PC-3 (cell line): ENCODE measurements at regions of chr11 and their contacts with region 1.

Region 1: DNA sequence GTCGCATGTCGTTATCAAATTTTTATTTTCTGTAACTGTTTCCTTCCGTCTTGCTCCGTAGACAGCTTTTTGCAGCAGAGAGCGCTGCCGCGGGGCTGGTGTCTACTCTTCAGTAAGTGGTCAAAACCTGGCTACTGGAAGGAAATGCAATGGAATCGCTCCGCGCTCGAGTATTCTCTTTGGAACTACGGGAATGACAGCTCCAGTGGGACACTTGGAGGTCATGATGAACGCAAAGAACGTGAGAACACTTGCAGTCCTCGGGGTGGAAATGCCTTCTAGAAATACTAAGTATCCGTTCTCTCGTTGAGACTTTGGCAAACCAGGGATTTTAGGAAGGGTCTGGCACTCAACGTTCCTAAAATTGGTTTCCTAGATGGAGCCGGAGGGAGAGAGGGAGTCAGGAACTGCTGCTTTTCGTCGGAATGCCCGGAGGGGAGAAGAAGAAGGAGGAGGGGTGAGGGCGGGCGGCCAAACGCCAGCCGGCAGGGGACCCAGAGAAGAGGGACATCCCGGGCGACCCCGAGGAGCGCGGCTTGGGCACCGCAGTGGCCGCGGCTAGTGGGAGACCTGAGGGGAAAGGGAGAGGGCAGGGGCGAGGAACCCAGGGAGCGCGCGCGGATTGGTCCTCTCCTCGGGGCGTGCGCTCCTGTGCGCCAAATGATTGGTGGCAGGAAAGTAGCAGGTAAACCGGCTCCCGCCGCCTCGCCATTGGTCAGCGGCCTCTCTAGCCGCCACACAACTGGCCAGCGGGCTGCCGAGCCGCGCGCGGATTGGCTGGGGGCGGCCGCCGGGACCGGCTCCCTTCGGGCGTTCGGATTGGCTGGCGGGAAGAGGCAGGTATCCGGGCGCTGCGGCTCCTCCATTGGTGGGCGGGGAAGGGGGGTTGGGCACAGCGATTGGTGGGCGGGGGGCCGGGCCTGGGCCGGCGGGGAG is 490 bp upstream of the BMAL1 start:
- DNase-seq: peak; percentile 96
- ATAC-seq: peak; percentile 93
- H3K4me3 ChIP-seq: peak overlapping the region; percentile 94
- H3K27ac ChIP-seq: no peak overlapping the region
- H3K4me1 ChIP-seq: no peaks in the 10 kb centered on the region
- H3K27me3 ChIP-seq: peaks cover 22% of the 10 kb centered on the region; the same call in 1 of the 2 replicates
- CTCF ChIP-seq: no peak

Region 2: DNA sequence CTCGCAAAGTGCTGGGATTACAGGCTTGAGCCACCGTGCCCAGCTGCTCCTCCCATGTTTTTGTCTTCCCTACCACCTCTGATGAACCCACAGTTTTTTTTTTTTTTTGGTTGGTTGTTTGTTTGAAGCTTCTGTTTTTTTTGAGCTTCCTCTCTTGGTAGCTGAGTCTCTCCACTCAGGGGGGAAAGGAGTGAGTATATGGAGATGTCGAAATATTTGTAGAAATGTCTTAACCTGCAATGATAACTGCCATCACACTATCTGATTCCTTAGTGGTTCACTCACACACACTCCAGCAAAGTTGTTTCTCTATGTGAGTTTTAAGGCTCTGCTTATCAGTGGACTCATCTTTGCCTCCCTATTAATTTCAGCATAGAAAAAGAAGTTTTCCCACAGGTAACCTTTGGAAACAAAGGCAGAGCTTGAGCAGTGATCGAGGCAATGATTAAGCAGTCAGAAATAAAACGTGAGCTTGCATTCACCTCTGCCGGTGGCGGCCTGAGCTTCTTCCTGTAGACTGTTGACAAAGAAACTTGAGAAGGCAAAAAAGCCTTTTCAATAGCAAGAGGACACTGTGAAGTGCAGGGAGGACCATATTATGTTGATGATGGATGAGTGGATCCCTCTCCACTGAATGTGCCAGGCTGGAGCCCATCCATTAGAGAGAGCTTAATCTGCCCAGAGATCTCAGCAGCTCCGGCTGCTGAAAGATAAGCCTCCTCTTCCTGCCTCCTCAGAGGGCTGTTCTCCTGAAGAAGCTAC is 297.0 kb before region 1 on chr11:
- CTCF ChIA-PET with region 1: no interaction called
- POLR2A ChIA-PET with region 1: interaction called, 11 read pairs
- intact Hi-C with region 1: no loop called
- DNase-seq: peak; percentile 24
- ATAC-seq: peak; percentile 65
- H3K4me3 ChIP-seq: no peak overlapping the region
- H3K27ac ChIP-seq: no peak overlapping the region
- H3K4me1 ChIP-seq: peaks cover 5% of the 10 kb centered on the region; the same call in 1 of the 2 replicates
- H3K27me3 ChIP-seq: no peaks in the 10 kb centered on the region
- CTCF ChIP-seq: no peak

Region 3: GRCh38 chr11:13216019-13216710 is 60.9 kb before region 1 on chr11:
- CTCF ChIA-PET with region 1: no interaction called
- POLR2A ChIA-PET with region 1: no interaction called
- intact Hi-C with region 1: loop called (anchors 5 kb)
- DNase-seq: peak; percentile 94
- ATAC-seq: peak; percentile 94
- H3K4me3 ChIP-seq: peak overlapping the region; percentile 48
- H3K27ac ChIP-seq: peak overlapping the region; percentile 99
- H3K4me1 ChIP-seq: peaks cover 42% of the 10 kb centered on the region
- H3K27me3 ChIP-seq: no peaks in the 10 kb centered on the region
- CTCF ChIP-seq: no peak

Region 4: DNA sequence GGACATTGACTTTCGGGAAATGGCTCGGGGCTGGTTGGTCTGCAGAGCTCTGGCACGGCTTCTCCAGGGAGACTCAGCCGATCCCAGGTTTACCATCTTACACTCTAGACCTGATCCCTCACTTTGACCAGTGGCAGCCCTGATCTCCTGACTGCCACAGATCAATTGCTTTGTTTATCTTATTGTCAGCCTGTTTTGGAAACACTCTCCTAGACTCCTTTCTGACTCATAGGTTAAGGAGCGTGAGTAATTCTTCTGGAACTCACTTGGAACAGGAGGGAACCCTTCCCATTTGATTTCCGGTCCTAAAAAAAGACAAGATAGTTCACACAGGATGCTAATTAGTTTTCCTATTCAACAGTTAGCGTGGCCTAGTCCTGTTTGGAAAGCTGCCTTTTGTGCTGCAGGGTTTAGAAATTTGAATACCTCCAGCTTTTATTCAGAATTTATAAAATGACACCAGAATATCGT is 15.5 kb before region 1 on chr11:
- CTCF ChIA-PET with region 1: no interaction called
- POLR2A ChIA-PET with region 1: interaction called, 4 read pairs
- intact Hi-C with region 1: loop called (anchors 1 kb)
- DNase-seq: peak; percentile 92
- ATAC-seq: peak; percentile 87
- H3K4me3 ChIP-seq: peak overlapping the region; percentile 31; the same call in 1 of the 2 replicates
- H3K27ac ChIP-seq: peak overlapping the region; percentile 85
- H3K4me1 ChIP-seq: peaks cover 27% of the 10 kb centered on the region
- H3K27me3 ChIP-seq: no peaks in the 10 kb centered on the region
- CTCF ChIP-seq: no peak

Region 5: GRCh38 chr11:13343931-13344717 is 67.0 kb after region 1 on chr11:
- CTCF ChIA-PET with region 1: no interaction called
- POLR2A ChIA-PET with region 1: no interaction called
- intact Hi-C with region 1: no loop called
- DNase-seq: peak; percentile 88
- ATAC-seq: peak; percentile 35
- H3K4me3 ChIP-seq: no peak overlapping the region
- H3K27ac ChIP-seq: no peak overlapping the region
- H3K4me1 ChIP-seq: peaks cover 15% of the 10 kb centered on the region
- H3K27me3 ChIP-seq: no peaks in the 10 kb centered on the region
- CTCF ChIP-seq: peak; percentile 89

Region 6: DNA sequence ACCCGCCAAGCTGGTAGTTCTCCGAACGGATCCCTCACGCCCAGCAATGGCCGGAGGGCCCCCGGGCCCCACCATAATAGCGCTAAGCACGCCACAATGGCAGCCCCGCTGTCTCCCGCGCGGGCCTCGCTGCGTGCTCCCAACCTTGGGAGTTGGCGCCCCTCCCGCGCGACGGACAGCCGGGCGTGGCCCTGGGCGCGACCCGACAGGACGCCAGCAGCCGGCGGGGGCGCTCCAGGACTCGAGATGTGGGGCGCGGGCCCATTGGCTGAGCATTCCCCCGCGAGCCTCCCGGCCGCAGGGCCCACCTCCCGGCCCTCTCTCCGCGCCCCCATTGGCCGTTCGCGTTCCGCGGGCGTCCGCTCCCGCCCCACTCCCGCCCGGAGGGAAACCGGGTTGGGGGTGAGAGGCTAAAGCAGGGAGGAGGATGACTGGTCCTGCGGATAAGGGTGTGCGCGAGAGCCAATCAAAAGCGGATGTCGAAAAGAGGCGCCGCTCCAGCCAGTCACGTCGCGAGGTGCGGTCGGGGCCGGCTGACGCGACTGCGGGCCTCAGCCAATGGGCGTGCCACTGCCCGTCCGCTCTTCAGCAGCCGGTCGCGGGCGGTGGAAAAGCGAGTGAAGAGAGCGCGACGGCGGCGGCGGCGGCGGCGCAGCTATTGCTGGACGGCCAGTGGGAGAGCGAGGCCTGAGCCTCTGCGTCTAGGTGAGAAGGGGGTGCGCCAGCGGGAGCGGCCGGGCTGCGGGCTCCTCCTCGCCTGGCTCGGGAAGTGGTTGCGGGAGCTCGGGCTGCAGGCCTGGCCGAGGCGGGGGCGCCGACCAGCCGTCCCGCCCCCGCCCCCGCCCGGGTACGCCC is 391.2 kb after region 1 on chr11 and contains the start of gene FAR1:
- CTCF ChIA-PET with region 1: no interaction called
- POLR2A ChIA-PET with region 1: no interaction called
- intact Hi-C with region 1: loop called (anchors 10 kb)
- DNase-seq: peak; percentile 98
- ATAC-seq: peak; percentile 86
- H3K4me3 ChIP-seq: peak within 1 kb of the TSS; percentile 92
- H3K27ac ChIP-seq: peak within 1 kb of the TSS; percentile 28; the same call in 1 of the 2 replicates
- H3K4me1 ChIP-seq: peaks cover 28% of the 10 kb centered on the region
- H3K27me3 ChIP-seq: no peaks in the 10 kb centered on the region
- CTCF ChIP-seq: peak; percentile 54
- total RNA-seq, gene FAR1: 31.6 and 45.6 TPM in 2 replicates